ENCODE measurements at regions of chr10 and their contacts with region 1.

Region 1: DNA sequence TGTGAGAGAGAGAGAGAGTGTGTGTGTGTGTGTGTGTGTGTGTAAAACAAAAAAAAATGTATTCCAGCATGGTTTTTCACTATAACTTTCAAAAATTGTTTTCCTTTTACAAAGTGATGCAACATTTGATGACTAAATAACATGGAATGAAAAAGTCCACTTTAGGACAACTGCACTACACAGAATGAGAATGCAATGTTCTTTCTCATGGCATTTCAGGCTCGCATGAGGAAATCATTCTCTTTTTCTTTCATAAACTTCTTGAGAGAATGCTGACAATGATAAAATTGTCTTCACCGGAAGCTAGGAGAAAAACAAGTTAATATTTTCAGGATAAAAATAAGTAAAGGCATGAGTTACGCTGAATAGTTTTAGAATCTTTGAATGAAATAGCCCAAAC is 53.7 kb downstream of the SLC16A12 start:
- DNase-seq: no peak
- ATAC-seq: peak; percentile 54 to 71
- H3K4me3 ChIP-seq: no peak overlapping the region
- H3K27ac ChIP-seq: no peak overlapping the region
- H3K4me1 ChIP-seq: peaks cover 8% of the 10 kb centered on the region
- H3K27me3 ChIP-seq: no peaks in the 10 kb centered on the region

Region 2: DNA sequence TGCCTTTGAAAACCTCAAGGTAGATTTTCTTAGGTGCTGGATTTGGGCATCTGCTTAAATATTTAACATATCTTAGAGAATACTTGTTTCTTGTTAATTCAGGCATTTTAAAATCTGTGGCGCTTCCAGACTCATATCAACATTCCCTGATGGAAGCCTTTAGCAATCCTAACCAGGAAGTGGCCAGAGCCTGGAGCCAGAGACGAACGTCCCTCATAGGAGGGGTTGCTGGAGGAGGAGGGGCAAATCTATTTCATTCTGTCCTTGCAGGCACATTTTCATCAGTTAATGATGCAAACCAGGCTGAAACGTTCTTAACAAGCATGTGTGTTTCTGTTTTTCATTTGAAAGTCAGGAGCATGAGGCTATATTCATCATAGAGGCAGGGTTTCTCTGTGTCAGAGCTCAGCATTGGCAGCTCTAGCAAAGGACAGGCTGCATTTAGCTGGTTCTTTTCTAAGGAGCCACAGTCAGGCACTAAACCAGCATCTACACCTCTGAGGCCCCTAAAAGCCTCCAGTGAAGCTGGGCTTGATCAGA is 197.7 kb before region 1 on chr10:
- intact Hi-C with region 1: no loop called
- DNase-seq: peak; percentile 75 to 83 (median 82)
- ATAC-seq: peak; percentile 97 to 98
- H3K4me3 ChIP-seq: peak overlapping the region; percentile 7
- H3K27ac ChIP-seq: peak overlapping the region; percentile 90
- H3K4me1 ChIP-seq: peaks cover 9% of the 10 kb centered on the region
- H3K27me3 ChIP-seq: no peaks in the 10 kb centered on the region

Region 3: GRCh38 chr10:89535171-89536012 is 53.7 kb after region 1 on chr10 and contains the start of gene SLC16A12:
- intact Hi-C with region 1: loop called in 3 of 4 experiments (anchors 10 kb)
- DNase-seq: peak; percentile 25 to 73 (median 69)
- ATAC-seq: peak; percentile 74 to 87
- H3K4me3 ChIP-seq: peak within 1 kb of the TSS; percentile 72
- H3K27ac ChIP-seq: no peak within 1 kb of the TSS
- H3K4me1 ChIP-seq: no peaks in the 10 kb centered on the region
- H3K27me3 ChIP-seq: no peaks in the 10 kb centered on the region
- total RNA-seq, gene SLC16A12: 3.3 to 7.2 (median 5.0) TPM

Region 4: GRCh38 chr10:89540420-89540949 is 58.8 kb after region 1 on chr10:
- intact Hi-C with region 1: loop called in 3 of 4 experiments (anchors 10 kb)
- DNase-seq: no peak
- ATAC-seq: no peak
- H3K4me3 ChIP-seq: no peak overlapping the region
- H3K27ac ChIP-seq: no peak overlapping the region
- H3K4me1 ChIP-seq: no peaks in the 10 kb centered on the region
- H3K27me3 ChIP-seq: no peaks in the 10 kb centered on the region

Region 5: DNA sequence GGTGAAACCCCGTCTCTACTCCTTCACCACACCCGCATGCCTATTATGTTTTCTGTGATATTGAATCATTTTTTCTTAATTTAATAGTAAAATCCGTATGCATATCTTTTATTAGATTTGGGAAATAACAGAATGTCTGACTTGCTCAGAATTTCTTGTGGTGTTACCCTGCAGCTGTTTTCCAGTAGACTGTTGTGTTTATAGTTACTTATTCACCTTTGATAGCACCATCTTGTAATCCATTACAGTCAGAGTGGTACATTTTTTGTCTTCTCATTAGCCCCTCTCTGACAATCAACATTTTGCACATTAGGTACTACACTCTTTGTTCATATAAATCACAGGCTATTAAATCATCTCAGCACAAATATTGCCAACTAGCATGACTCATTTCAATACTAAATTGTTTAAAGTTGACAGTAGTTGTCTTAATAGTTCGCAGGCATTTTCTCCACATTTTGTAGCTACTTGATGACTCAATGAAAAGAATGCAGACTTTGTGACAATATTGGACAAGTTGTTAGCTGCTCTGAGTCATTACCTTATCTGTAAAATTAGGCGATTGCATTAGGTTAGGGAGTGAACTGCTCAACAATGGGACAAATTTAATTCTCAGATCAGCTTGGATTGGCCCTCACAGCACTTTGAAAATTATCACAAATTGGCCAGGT is 71.5 kb after region 1 on chr10:
- intact Hi-C with region 1: loop called in 2 of 4 experiments (anchors 5 to 10 kb)
- DNase-seq: no peak
- ATAC-seq: peak; percentile 63 to 79
- H3K4me3 ChIP-seq: no peak overlapping the region
- H3K27ac ChIP-seq: no peak overlapping the region
- H3K4me1 ChIP-seq: no peaks in the 10 kb centered on the region
- H3K27me3 ChIP-seq: no peaks in the 10 kb centered on the region